Activated B cell treated with CpG ODN at 0.5 μM for 24 hours (primary cell): ENCODE measurements at regions of chr9 and their contacts with region 1.

Region 1: DNA sequence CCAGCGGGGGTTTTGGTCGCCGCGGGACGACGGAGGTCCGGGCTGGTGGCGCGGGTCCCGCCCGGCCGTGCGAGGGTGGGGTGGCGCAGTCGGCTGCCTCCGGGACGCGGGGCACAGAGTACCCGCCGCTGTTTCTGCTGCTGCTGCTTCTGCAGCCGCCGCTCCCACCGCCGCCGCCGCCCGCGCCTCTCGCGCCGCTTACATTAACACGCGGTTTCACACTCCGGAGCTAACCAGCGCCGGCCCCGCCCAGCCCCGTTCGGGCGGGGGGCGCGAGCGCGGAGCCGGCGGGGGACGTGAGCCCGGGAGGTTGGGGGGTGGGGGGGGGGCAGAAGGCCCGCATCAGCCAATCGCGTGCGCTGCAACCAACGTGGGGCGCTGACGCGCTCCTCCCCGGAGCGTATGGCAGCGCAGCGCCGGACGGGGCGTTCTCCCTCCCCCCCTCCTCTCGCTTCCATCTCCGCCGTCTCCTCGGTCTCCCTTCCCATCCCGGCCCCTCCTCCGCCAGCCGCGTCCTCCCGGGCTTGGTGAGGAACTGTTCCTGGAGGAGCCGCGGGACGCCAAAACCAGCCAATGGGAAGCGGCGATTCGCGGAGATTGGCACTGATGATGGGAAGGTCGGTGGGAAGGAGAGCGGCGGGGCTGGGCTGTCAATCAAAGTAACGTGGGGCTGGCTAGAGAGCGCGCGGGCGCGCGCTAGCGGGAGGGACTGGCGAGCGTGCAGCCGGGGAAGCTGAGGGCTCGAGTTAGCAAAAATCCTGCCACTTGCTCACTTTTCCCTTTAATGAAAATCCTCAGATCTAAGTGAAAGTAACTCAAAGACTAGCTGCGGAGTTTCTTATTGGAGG is at the start of gene TLE1:
- DNase-seq: peak; percentile 94
- ATAC-seq: peak; percentile 77
- H3K4me3 Mint-ChIP-seq: peak within 1 kb of the TSS; percentile 96
- H3K27ac Mint-ChIP-seq: peak within 1 kb of the TSS; percentile 89
- H3K4me1 Mint-ChIP-seq: peaks cover 17% of the 10 kb centered on the region
- H3K27me3 Mint-ChIP-seq: no peaks in the 10 kb centered on the region
- CTCF ChIP-seq: no peak
- total RNA-seq, gene TLE1: 15.6 and 16.3 TPM in 2 replicates

Region 2: DNA sequence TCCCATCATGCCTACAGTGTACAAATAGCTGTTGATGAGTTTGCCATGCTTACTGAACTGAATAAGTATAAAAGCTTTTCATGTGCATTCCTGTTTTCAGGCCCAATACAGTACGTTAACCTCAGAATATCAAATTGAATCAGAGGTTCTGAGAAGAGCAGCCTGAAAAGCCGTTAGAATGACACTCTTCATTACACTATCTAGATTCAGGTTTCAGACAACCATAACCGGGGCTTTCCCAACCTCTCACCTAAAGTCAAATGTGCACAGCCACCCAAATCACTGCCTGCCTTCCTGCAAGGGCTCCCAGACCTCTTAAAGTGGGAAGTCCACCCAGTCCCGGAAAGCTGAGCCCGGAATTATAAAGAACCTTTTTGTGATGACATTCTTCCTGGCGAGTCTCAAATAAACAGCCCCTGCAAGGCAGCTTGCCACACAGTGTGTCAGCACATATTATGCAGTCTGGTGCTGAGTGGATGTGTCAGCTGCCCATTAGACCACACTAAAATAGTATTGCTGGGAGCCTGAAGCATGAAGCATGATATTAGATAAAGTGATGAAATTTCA is 1872.0 kb before region 1 on chr9:
- CTCF ChIA-PET with region 1: no interaction called
- POLR2A ChIA-PET with region 1: no interaction called
- intact Hi-C with region 1: loop called (anchors 2 kb)
- DNase-seq: peak; percentile 24
- ATAC-seq: peak; percentile 72
- H3K4me3 Mint-ChIP-seq: peak overlapping the region; percentile 17
- H3K27ac Mint-ChIP-seq: peak overlapping the region; percentile 47
- H3K4me1 Mint-ChIP-seq: peaks cover 52% of the 10 kb centered on the region
- H3K27me3 Mint-ChIP-seq: peaks cover 2% of the 10 kb centered on the region
- CTCF ChIP-seq: no peak

Region 3: GRCh38 chr9:81431641-81432040 is 257.9 kb before region 1 on chr9:
- CTCF ChIA-PET with region 1: no interaction called
- POLR2A ChIA-PET with region 1: no interaction called
- intact Hi-C with region 1: no loop called
- DNase-seq: no peak
- ATAC-seq: no peak
- H3K4me3 Mint-ChIP-seq: no peak overlapping the region
- H3K27ac Mint-ChIP-seq: no peak overlapping the region
- H3K4me1 Mint-ChIP-seq: no peaks in the 10 kb centered on the region
- H3K27me3 Mint-ChIP-seq: no peaks in the 10 kb centered on the region
- CTCF ChIP-seq: no peak

Region 4: DNA sequence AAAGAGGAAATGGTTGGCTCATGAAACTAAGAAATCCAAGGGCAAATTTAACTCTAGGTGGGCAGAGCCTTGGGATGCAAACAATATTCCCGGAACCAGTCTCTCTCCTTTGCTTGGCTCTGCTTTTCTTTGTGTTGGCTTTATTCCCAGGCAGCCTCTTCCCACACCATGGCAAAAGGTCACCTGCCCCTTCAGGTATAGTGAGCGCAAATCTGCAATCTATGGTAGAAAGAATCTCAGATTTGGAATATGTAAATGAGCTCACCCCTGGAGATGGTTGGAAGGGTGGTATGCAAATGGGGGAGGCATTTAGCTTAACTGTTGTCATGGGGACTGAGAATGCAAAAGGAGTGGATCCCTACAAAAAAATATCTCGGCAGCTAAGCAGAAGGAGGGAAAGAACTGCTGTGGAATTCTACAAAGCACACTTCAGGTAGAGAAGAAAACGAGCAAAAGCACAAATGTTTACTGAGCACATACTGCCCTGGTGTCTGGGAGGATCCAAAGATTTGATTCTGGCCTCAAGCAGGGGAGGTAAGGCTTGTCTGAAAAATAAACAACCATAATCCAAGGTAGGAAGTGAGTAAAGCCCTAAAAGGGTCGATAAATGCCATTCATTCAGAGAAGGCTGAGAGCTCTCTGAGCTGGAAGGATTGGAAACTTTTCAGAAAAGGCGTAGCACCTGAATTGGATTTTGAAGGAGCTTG is 139.9 kb before region 1 on chr9:
- CTCF ChIA-PET with region 1: no interaction called
- POLR2A ChIA-PET with region 1: no interaction called
- intact Hi-C with region 1: no loop called
- DNase-seq: no peak
- ATAC-seq: no peak
- H3K4me3 Mint-ChIP-seq: no peak overlapping the region
- H3K27ac Mint-ChIP-seq: no peak overlapping the region
- H3K4me1 Mint-ChIP-seq: no peaks in the 10 kb centered on the region
- H3K27me3 Mint-ChIP-seq: peaks cover 5% of the 10 kb centered on the region
- CTCF ChIP-seq: no peak

Region 5: DNA sequence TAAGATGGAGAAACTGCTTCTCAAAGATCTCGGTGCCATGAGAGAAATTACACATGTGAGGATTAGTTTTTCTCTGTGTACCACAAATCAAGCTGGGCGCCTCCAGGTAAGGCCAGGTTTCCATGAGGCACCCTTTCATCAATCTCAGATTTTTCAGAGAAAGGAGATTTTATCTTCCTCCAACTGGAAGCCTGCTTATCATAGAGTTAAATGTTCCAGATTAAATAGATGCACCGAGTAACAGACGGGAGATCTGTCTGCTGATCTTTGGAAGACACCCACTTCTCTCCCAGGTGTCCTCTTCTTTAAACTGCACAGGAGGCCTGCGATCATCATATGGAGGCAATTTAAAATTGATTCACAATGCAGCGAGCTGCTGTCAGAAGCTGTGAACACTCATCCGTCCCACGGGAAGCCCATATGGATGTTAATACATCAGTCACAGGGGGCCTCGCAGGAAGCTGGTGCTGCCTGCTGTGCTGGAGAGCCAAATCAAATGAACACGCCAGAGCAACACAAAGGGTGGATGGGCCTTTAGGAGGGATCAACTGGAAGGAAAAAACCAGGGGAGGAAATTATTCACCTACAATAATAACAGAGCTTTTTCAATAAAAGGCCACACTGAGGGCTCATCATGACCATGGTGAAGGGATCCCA is 93.6 kb before region 1 on chr9:
- CTCF ChIA-PET with region 1: interaction called, 8 read pairs
- POLR2A ChIA-PET with region 1: interaction called, 4 read pairs
- intact Hi-C with region 1: loop called (anchors 2 kb)
- DNase-seq: no peak
- ATAC-seq: no peak
- H3K4me3 Mint-ChIP-seq: no peak overlapping the region
- H3K27ac Mint-ChIP-seq: peak overlapping the region; percentile 22
- H3K4me1 Mint-ChIP-seq: peaks cover 75% of the 10 kb centered on the region
- H3K27me3 Mint-ChIP-seq: no peaks in the 10 kb centered on the region
- CTCF ChIP-seq: no peak

Region 6: GRCh38 chr9:81632599-81632998 is 57.0 kb before region 1 on chr9:
- CTCF ChIA-PET with region 1: interaction called, 8 read pairs
- POLR2A ChIA-PET with region 1: no interaction called
- intact Hi-C with region 1: loop called (anchors 2 kb)
- DNase-seq: no peak
- ATAC-seq: no peak
- H3K4me3 Mint-ChIP-seq: no peak overlapping the region
- H3K27ac Mint-ChIP-seq: no peak overlapping the region
- H3K4me1 Mint-ChIP-seq: peaks cover 34% of the 10 kb centered on the region
- H3K27me3 Mint-ChIP-seq: no peaks in the 10 kb centered on the region
- CTCF ChIP-seq: no peak

Region 7: GRCh38 chr9:81671880-81672280 is 17.7 kb before region 1 on chr9:
- CTCF ChIA-PET with region 1: interaction called, 9 read pairs
- POLR2A ChIA-PET with region 1: interaction called, 7 read pairs
- intact Hi-C with region 1: loop called (anchors 1 kb)
- DNase-seq: no peak
- ATAC-seq: no peak
- H3K4me3 Mint-ChIP-seq: no peak overlapping the region
- H3K27ac Mint-ChIP-seq: no peak overlapping the region
- H3K4me1 Mint-ChIP-seq: peaks cover 74% of the 10 kb centered on the region
- H3K27me3 Mint-ChIP-seq: no peaks in the 10 kb centered on the region
- CTCF ChIP-seq: no peak

Region 8: GRCh38 chr9:82091610-82092009 is 402.0 kb after region 1 on chr9:
- CTCF ChIA-PET with region 1: no interaction called
- POLR2A ChIA-PET with region 1: no interaction called
- intact Hi-C with region 1: loop called (anchors 2 kb)
- DNase-seq: no peak
- ATAC-seq: peak; percentile 83
- H3K4me3 Mint-ChIP-seq: peak overlapping the region; percentile 59
- H3K27ac Mint-ChIP-seq: peak overlapping the region; percentile 85
- H3K4me1 Mint-ChIP-seq: peaks cover 55% of the 10 kb centered on the region
- H3K27me3 Mint-ChIP-seq: no peaks in the 10 kb centered on the region
- CTCF ChIP-seq: no peak

Region 9: DNA sequence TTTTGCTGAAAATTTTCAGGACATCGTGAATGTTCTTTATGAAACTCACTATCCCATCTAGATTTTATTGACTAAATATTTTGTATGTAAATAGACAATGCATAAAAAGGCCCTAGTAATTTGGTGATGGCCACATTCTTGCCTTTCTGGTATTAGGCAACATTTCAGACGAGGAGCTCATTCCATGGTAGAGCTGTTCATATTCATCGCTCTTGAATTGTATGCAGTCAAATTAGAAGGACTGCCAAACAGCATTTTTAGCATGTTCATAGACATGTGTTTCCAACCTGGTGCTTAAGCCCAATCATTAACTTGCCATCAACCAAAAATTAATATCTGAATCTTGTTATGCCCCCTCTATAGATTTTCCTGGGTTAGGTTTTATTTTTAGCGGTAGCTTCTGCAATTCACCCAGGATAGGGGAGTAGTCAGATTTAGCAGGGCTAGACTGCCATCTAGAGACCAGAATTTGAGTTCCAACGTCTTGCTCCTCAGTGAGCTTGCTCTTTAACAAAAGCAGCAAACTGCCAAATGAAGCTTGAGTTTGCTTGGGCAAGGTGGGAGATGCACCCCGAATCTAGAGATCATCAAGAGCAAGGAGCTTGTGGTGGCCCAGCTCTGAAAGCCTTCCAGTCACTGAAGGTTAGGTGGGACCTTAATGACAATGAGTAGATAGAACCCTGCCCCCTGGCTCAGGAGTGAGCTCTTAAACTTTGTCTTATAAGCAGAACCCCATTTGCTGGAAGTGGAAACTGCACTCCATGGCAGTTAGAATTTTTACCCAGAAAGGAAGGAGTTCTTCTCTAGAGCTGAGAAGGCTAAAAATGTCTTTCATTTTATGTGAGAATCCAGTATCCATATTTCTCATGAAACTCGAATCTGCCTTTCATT is 917.2 kb after region 1 on chr9:
- CTCF ChIA-PET with region 1: interaction called, 5 read pairs
- POLR2A ChIA-PET with region 1: no interaction called
- intact Hi-C with region 1: loop called (anchors 2 kb)
- DNase-seq: no peak
- ATAC-seq: peak; percentile 45
- H3K4me3 Mint-ChIP-seq: no peak overlapping the region
- H3K27ac Mint-ChIP-seq: no peak overlapping the region
- H3K4me1 Mint-ChIP-seq: no peaks in the 10 kb centered on the region
- H3K27me3 Mint-ChIP-seq: no peaks in the 10 kb centered on the region
- CTCF ChIP-seq: peak; percentile 75